Ovary (tissue), 10 donors: ENCODE measurements at regions of chr16 and their contacts with region 1.

Region 1: GRCh38 chr16:48385272-48386150 is at the start of gene SIAH1:
- DNase-seq: peak; percentile 82 to 94 (median 88)
- H3K4me3 ChIP-seq: peak within 1 kb of the TSS; percentile 88
- H3K27ac ChIP-seq: peak within 1 kb of the TSS; percentile 99 to 100
- H3K4me1 ChIP-seq: peaks cover 12% of the 10 kb centered on the region
- H3K27me3 ChIP-seq: no peaks in the 10 kb centered on the region
- CTCF ChIP-seq: peak in 2 of 3 donors; percentile 1 to 20
- EP300 ChIP-seq: no peak
- POLR2A ChIP-seq: peak; percentile 78
- total RNA-seq, gene SIAH1: 24.3 to 36.4 (median 28.6) TPM

Region 2: GRCh38 chr16:48409839-48410611 is 24.5 kb after region 1 on chr16:
- intact Hi-C with region 1: no loop called
- DNase-seq: peak; percentile 28 to 67 (median 49)
- H3K4me3 ChIP-seq: no peak overlapping the region
- H3K27ac ChIP-seq: no peak overlapping the region
- H3K4me1 ChIP-seq: peaks cover 10% of the 10 kb centered on the region
- H3K27me3 ChIP-seq: no peaks in the 10 kb centered on the region
- CTCF ChIP-seq: no peak
- EP300 ChIP-seq: no peak
- POLR2A ChIP-seq: no peak

Region 3: GRCh38 chr16:48420437-48420836 is 34.9 kb after region 1 on chr16:
- intact Hi-C with region 1: no loop called
- DNase-seq: no peak
- H3K4me3 ChIP-seq: no peak overlapping the region
- H3K27ac ChIP-seq: no peak overlapping the region
- H3K4me1 ChIP-seq: no peaks in the 10 kb centered on the region
- H3K27me3 ChIP-seq: no peaks in the 10 kb centered on the region
- CTCF ChIP-seq: no peak
- EP300 ChIP-seq: no peak
- POLR2A ChIP-seq: no peak

Region 4: GRCh38 chr16:48432136-48432535 is 46.6 kb after region 1 on chr16:
- intact Hi-C with region 1: no loop called
- DNase-seq: no peak
- H3K4me3 ChIP-seq: no peak overlapping the region
- H3K27ac ChIP-seq: no peak overlapping the region
- H3K4me1 ChIP-seq: peaks cover 5% of the 10 kb centered on the region
- H3K27me3 ChIP-seq: no peaks in the 10 kb centered on the region
- CTCF ChIP-seq: no peak
- EP300 ChIP-seq: no peak
- POLR2A ChIP-seq: no peak

Region 5: GRCh38 chr16:48499923-48500381 is 114.4 kb after region 1 on chr16:
- intact Hi-C with region 1: loop called in 1 of 4 experiments (anchors 10 kb)
- DNase-seq: peak; percentile 60 to 81 (median 69)
- H3K4me3 ChIP-seq: no peak overlapping the region
- H3K27ac ChIP-seq: peak overlapping the region; percentile 53 to 76
- H3K4me1 ChIP-seq: peaks cover 20% of the 10 kb centered on the region
- H3K27me3 ChIP-seq: no peaks in the 10 kb centered on the region
- CTCF ChIP-seq: no peak
- EP300 ChIP-seq: no peak
- POLR2A ChIP-seq: no peak

Region 6: DNA sequence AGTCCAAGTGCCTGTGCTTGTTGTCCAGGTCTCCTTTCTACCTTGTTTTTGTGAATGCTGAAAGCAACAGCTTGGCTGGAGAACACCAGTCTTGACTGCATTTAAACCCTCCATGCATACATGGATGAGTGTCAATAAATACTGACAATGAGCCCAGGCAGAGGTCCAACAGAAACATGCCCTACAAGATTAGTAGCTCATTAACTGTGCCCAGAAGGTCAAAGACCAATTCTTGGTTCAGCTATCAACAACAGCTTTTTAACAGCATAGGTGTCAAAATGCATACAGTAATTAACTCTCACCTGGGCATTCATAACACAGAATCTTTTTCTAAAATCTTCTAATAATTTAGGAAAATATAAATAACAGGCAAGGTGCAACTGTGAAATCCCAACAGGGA is 161.3 kb after region 1 on chr16:
- intact Hi-C with region 1: no loop called
- DNase-seq: no peak
- H3K4me3 ChIP-seq: no peak overlapping the region
- H3K27ac ChIP-seq: no peak overlapping the region
- H3K4me1 ChIP-seq: no peaks in the 10 kb centered on the region
- H3K27me3 ChIP-seq: no peaks in the 10 kb centered on the region
- CTCF ChIP-seq: no peak
- EP300 ChIP-seq: no peak
- POLR2A ChIP-seq: no peak

Region 7: GRCh38 chr16:48609652-48610029 is 224.1 kb after region 1 on chr16:
- intact Hi-C with region 1: loop called in 1 of 4 experiments (anchors 10 kb)
- DNase-seq: peak in 3 of 5 donors; percentile 66 to 85 (median 79)
- H3K4me3 ChIP-seq: peak overlapping the region; percentile 66
- H3K27ac ChIP-seq: peak overlapping the region; percentile 88 to 91
- H3K4me1 ChIP-seq: peaks cover 18% of the 10 kb centered on the region
- H3K27me3 ChIP-seq: no peaks in the 10 kb centered on the region
- CTCF ChIP-seq: no peak
- EP300 ChIP-seq: no peak
- POLR2A ChIP-seq: no peak